ENCODE measurements at regions of chr1 and their contacts with region 1.

Region 1: GRCh38 chr1:23634842-23635651 is 56.6 kb upstream of the RPL11 start:
- DNase-seq: peak; percentile 91
- H3K4me3 Mint-ChIP-seq: peak overlapping the region; percentile 20
- H3K27ac Mint-ChIP-seq: peak overlapping the region; percentile 62
- H3K4me1 Mint-ChIP-seq: peaks cover 24% of the 10 kb centered on the region
- H3K27me3 Mint-ChIP-seq: no peaks in the 10 kb centered on the region

Region 2: DNA sequence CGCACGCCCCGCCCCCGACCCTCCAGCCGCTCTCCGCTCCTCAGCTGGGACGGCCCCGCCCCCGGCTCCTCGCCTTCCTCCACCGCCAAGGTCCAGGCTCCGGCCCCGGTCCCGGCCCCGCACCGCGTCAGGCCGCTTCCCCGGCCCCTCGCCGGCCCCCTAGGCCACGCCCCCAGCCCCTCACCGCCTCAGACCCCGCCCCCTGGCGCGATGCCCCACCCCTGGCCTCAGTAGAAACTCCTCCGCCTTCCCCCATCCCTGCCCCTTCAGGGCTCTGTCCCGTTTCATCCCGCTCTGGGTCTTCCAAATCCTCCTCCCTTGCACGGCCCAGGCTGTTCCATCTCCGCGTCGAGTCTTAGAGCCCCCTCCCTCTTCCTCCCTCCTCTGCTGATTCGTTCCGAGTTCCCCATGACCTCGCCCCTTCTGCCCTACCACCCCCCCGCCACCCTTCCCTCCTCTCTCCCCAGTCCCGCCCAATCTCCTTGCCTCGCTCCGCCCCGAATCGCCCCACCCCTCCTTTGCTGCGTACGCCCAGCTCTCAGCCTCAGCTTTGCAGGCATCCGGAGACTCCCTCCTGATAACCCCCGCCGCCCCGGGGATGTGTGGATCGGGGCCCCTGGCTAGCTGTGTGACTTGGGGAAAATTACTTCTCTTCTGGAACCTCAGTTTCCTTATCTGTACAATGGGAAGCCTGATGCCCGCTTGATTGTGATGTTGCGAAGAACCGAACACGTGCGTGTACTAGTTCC is 150.6 kb before region 1 on chr1:
- intact Hi-C with region 1: loop called (anchors 1 kb)
- DNase-seq: peak; percentile 96
- H3K4me3 Mint-ChIP-seq: peak overlapping the region; percentile 89
- H3K27ac Mint-ChIP-seq: peak overlapping the region; percentile 27
- H3K4me1 Mint-ChIP-seq: peaks cover 17% of the 10 kb centered on the region
- H3K27me3 Mint-ChIP-seq: peaks cover 65% of the 10 kb centered on the region

Region 3: DNA sequence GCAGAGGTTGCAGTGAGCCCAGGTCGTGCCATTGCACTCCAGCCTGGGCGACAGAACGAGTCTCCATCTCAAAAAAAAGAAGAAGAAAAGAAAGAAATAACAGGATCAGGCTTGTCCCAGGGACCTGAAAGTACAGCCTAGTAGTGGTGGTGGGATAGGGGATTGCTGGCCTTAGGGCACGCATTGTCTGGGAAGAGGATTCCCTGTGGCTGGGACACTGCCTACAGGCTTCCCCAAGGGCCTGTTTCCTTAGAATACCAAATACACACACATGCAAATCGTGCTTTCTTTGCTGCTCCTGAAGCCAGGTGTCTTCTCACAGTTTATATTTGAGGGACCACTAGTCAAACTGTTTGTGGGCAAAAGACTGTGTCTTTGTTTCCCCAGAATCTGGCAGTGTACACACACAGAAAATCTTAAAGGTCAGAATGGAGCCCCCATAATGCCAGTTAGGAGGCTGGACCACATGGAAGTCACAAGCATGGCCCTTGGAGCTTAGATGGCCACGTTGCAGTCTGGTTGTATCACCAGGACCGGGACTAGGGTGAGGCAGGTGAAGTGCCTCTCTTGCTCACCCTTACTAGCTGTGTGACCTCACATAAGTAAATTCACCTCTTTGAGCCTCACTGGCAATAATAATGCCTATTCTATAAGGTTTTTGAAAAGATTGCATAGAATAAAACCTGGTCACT is 138.4 kb before region 1 on chr1:
- intact Hi-C with region 1: loop called (anchors 2 kb)
- DNase-seq: no peak
- H3K4me3 Mint-ChIP-seq: no peak overlapping the region
- H3K27ac Mint-ChIP-seq: no peak overlapping the region
- H3K4me1 Mint-ChIP-seq: no peaks in the 10 kb centered on the region
- H3K27me3 Mint-ChIP-seq: peaks cover 7% of the 10 kb centered on the region

Region 4: GRCh38 chr1:23664837-23665795 is 30.1 kb after region 1 on chr1:
- intact Hi-C with region 1: no loop called
- DNase-seq: peak; percentile 64
- H3K4me3 Mint-ChIP-seq: no peak overlapping the region
- H3K27ac Mint-ChIP-seq: no peak overlapping the region
- H3K4me1 Mint-ChIP-seq: peaks cover 5% of the 10 kb centered on the region
- H3K27me3 Mint-ChIP-seq: peaks cover 3% of the 10 kb centered on the region